ENCODE measurements at regions of chr3 and their contacts with region 1.

Region 1: GRCh38 chr3:138329127-138329983 is at the start of gene NME9:
- DNase-seq: peak; percentile 79 to 87
- ATAC-seq: peak; percentile 69 to 70
- H3K4me3 ChIP-seq: peak within 1 kb of the TSS; percentile 68 to 89 (median 74)
- H3K27ac ChIP-seq: peak within 1 kb of the TSS; percentile 76 to 84 (median 80)
- H3K4me1 ChIP-seq: peaks cover 23 to 39% of the 10 kb centered on the region in 2 donors
- H3K27me3 ChIP-seq: no peaks in the 10 kb centered on the region
- CTCF ChIP-seq: peak; percentile 22 to 79 (median 41)
- POLR2A ChIP-seq: peak in 1 of 2 donors; percentile 9
- total RNA-seq, gene NME9: 0.38 to 7.3 (median 2.0) TPM in 3 of 4 donors, not detected in the other

Region 2: GRCh38 chr3:138174421-138175122 is 154.8 kb before region 1 on chr3 and contains the start of gene DBR1:
- in situ Hi-C with region 1: loop called in 1 of 4 experiments (anchors 25 kb)
- intact Hi-C with region 1: no loop called
- DNase-seq: peak; percentile 65 to 66
- ATAC-seq: peak; percentile 92 to 94
- H3K4me3 ChIP-seq: peak within 1 kb of the TSS; percentile 66 to 99 (median 83)
- H3K27ac ChIP-seq: peak within 1 kb of the TSS; percentile 78 to 83 (median 82)
- H3K4me1 ChIP-seq: peaks cover 5 to 8% of the 10 kb centered on the region in 2 donors
- H3K27me3 ChIP-seq: no peaks in the 10 kb centered on the region
- CTCF ChIP-seq: no peak
- POLR2A ChIP-seq: peak; percentile 50 to 71
- total RNA-seq, gene DBR1: 6.5 to 22.2 (median 6.6) TPM

Region 3: DNA sequence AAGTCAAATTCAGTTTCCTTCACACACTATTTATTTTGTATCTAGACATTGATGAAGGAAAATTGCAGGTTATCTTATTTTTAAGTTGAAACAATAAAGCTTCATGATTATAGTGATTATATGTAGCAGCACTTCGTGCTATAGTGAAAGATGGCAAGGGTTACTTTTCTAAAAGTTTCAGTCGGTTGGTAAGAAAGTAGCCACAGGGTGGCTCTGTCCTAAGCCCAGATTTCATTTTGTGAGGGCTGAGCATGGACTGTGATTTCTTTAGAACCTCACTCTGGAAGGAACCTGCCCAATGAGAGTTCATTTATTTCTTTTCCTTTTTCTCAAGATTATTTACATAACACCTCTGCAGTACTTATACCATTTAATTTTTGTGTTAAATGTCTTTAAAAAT is 66.3 kb before region 1 on chr3:
- in situ Hi-C with region 1: no loop called
- intact Hi-C with region 1: loop called (anchors 2 kb)
- DNase-seq: no peak
- ATAC-seq: peak; percentile 51 to 66
- H3K4me3 ChIP-seq: no peak overlapping the region
- H3K27ac ChIP-seq: no peak overlapping the region
- H3K4me1 ChIP-seq: peaks cover 0 to 1% of the 10 kb centered on the region in 2 donors
- H3K27me3 ChIP-seq: no peaks in the 10 kb centered on the region
- CTCF ChIP-seq: peak in 2 of 5 experiments; percentile 24 to 30
- POLR2A ChIP-seq: no peak

Region 4: DNA sequence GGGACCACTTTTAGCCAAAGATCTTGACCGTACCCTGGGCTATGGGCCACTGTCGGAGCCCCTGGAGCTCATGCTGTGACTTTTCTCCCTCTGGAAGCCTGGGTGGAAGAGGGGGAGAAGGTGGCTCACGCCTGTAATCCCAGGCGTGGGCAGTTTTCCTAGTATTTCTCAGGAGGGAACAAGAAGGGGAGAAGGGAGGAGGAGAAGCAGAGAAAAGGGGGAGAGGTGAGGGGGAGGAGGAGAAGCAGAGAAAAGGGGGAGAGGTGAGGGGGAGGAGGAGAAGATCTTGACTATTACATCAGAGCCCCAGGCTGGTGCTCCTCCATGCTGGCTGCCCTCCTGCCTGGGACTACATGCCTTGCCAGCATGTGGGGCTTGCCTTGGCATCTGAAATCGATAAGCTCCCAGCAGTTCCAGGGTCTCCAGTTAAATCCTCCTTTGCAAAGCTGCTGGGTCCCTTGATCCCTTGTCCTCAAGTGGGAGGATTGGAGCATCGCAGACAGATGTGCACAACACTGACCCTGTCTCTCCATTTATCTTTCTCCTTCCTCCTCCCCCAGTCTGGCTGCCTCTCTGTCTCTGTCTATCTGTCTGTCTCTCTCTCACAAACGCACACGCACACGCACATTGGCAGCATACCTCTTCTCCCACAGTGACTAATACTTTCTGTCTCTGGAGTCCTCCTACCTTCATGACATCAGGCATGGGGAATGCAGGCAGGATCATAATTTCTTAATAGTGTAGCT is 60.7 kb after region 1 on chr3:
- in situ Hi-C with region 1: loop called in 1 of 4 experiments (anchors 10 kb)
- intact Hi-C with region 1: no loop called
- DNase-seq: peak in 1 of 2 donors; percentile 64
- ATAC-seq: peak; percentile 76 to 94
- H3K4me3 ChIP-seq: no peak overlapping the region
- H3K27ac ChIP-seq: peak overlapping the region; percentile 54 to 76 (median 63)
- H3K4me1 ChIP-seq: peaks cover 23 to 54% of the 10 kb centered on the region in 2 donors
- H3K27me3 ChIP-seq: no peaks in the 10 kb centered on the region
- CTCF ChIP-seq: no peak
- POLR2A ChIP-seq: no peak

Region 5: DNA sequence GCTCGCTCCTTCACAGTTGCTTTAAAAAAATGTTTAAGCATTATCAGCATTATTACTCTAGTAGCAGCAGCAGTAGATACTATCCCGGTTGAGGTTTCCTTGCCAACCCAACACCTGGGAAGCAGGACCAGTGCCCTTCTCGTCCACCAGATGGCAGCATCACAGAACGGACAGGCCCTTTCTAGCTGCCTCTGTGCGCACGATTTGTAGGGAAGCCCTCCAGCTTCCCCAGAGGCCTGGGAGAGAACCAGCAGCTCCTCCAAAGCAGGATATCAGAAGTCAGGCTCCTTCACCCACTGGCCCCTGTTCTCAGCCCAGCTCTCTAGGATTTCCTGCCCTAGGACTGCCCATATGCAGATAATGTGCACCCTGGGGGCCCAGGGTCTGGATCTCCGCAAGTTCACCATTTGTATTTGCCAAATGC is 88.2 kb after region 1 on chr3:
- in situ Hi-C with region 1: no loop called
- intact Hi-C with region 1: loop called (anchors 5 kb)
- DNase-seq: peak; percentile 64 to 77
- ATAC-seq: peak; percentile 85 to 96
- H3K4me3 ChIP-seq: no peak overlapping the region
- H3K27ac ChIP-seq: no peak overlapping the region
- H3K4me1 ChIP-seq: peaks cover 7 to 10% of the 10 kb centered on the region in 2 donors
- H3K27me3 ChIP-seq: no peaks in the 10 kb centered on the region
- CTCF ChIP-seq: peak; percentile 83 to 93 (median 86)
- POLR2A ChIP-seq: no peak

Region 6: DNA sequence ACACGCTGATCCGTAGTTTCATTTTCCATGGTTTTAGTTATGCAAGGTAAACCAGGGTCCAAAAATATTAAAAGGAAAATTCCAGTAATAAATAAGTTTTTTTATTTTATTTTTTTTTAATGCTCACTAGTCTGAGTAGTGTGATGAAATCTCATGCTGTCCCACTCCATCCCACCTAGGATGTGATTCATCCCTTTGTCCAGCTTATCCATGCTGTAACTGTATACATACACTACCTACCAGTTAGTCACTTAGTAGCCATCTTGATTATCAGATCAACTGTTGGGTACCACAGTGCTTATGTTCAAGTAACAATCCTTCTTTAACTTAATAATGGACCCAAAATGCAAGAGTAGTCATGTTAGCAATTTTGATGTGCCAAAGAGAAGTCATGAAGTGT is 180.2 kb after region 1 on chr3:
- in situ Hi-C with region 1: no loop called
- intact Hi-C with region 1: no loop called
- DNase-seq: no peak
- ATAC-seq: no peak
- H3K4me3 ChIP-seq: no peak overlapping the region
- H3K27ac ChIP-seq: no peak overlapping the region
- H3K4me1 ChIP-seq: peaks cover 0 to 7% of the 10 kb centered on the region in 2 donors
- H3K27me3 ChIP-seq: no peaks in the 10 kb centered on the region
- CTCF ChIP-seq: no peak
- POLR2A ChIP-seq: no peak

Region 7: GRCh38 chr3:138594150-138594934 is 265.0 kb after region 1 on chr3 and contains the start of gene CEP70:
- in situ Hi-C with region 1: no loop called
- intact Hi-C with region 1: loop called (anchors 5 kb)
- DNase-seq: peak; percentile 88 to 94
- ATAC-seq: peak; percentile 96 to 97
- H3K4me3 ChIP-seq: peak within 1 kb of the TSS; percentile 63 to 86 (median 80)
- H3K27ac ChIP-seq: peak within 1 kb of the TSS; percentile 87 to 95 (median 92)
- H3K4me1 ChIP-seq: peaks cover 0 to 9% of the 10 kb centered on the region in 2 donors
- H3K27me3 ChIP-seq: no peaks in the 10 kb centered on the region
- CTCF ChIP-seq: peak; percentile 88 to 96 (median 91)
- POLR2A ChIP-seq: peak; percentile 87 to 94
- total RNA-seq, gene CEP70: 9.8 to 17.4 (median 12.3) TPM

Measured in gastrocnemius medialis (tissue), 4 donors.